Psoas muscle (tissue), 8 donors: ENCODE measurements at regions of chr2 and their contacts with region 1.

Region 1: DNA sequence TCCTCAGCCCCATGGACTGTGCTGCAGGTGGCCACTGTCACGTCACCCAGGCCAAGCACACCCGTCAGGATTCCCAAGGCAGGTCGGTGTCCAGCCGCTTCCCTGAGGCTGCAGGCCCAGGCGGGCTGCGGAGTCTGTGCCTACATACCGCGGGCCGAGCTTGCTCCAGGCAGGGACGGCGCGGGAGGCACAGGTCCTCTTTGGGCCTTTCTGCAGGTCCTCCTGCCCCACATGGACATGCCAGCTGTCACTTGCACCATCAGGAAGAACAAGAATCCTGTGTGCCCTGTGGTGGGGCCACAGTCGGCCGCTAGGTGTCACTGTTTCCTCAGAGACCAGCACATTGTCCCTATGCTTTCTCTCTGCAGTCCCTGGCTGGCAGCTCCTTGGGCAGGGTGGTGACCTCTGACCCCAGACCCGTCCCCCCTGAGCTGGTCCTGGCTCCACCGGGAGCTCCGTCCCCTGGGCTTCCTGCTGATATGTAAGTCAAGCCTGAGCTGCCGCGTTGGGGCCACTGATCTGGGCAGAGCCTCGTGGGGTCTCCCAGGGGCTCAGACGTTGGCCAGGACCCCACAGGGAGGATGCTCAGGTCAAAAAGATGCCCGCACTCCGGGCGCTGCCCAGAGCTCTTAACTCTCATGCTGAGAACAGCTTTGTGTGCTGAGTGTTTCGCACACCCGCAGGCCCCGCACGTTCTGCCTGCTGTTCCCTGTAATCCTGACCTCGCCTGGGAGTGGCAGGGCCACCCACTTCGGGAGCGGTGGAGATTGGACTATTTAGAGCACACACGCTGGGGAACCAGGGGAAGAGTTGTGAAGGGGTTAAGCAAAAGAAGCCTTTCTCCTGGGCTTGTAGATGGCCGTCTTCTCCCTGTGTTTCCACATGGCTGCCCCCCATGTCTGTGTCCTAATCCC is 17.3 kb upstream of the AGXT start:
- DNase-seq: peak; percentile 87 to 91
- ATAC-seq: peak; percentile 96 to 100 (median 98)
- H3K4me3 ChIP-seq: no peak overlapping the region
- H3K27ac ChIP-seq: no peak overlapping the region
- H3K4me1 ChIP-seq: no peaks in the 10 kb centered on the region
- H3K27me3 ChIP-seq: no peaks in the 10 kb centered on the region
- CTCF ChIP-seq: peak; percentile 95

Region 2: GRCh38 chr2:240412211-240412861 is 439.0 kb before region 1 on chr2:
- intact Hi-C with region 1: no loop called
- DNase-seq: peak in 1 of 2 donors; percentile 57
- ATAC-seq: peak; percentile 11 to 38 (median 32)
- H3K4me3 ChIP-seq: no peak overlapping the region
- H3K27ac ChIP-seq: no peak overlapping the region
- H3K4me1 ChIP-seq: no peaks in the 10 kb centered on the region
- H3K27me3 ChIP-seq: no peaks in the 10 kb centered on the region
- CTCF ChIP-seq: no peak

Region 3: GRCh38 chr2:241087420-241088268 is 236.3 kb after region 1 on chr2:
- intact Hi-C with region 1: loop called in 1 of 2 experiments (anchors 10 kb)
- DNase-seq: peak in 1 of 2 donors; percentile 46
- ATAC-seq: no peak
- H3K4me3 ChIP-seq: no peak overlapping the region
- H3K27ac ChIP-seq: no peak overlapping the region
- H3K4me1 ChIP-seq: peaks cover 7% of the 10 kb centered on the region
- H3K27me3 ChIP-seq: no peaks in the 10 kb centered on the region
- CTCF ChIP-seq: no peak